Lower lobe of right lung (tissue), 2 donors: ENCODE measurements at regions of chr4 and their contacts with region 1.

Region 1: GRCh38 chr4:74133786-74134499 is 24.0 kb upstream of the MTHFD2L start:
- DNase-seq: peak; percentile 72
- ATAC-seq: peak; percentile 93 to 98
- H3K4me3 ChIP-seq: no peak overlapping the region
- H3K27ac ChIP-seq: no peak overlapping the region
- H3K4me1 ChIP-seq: peaks cover 4% of the 10 kb centered on the region
- H3K27me3 ChIP-seq: no peaks in the 10 kb centered on the region
- CTCF ChIP-seq: peak; percentile 81

Region 2: DNA sequence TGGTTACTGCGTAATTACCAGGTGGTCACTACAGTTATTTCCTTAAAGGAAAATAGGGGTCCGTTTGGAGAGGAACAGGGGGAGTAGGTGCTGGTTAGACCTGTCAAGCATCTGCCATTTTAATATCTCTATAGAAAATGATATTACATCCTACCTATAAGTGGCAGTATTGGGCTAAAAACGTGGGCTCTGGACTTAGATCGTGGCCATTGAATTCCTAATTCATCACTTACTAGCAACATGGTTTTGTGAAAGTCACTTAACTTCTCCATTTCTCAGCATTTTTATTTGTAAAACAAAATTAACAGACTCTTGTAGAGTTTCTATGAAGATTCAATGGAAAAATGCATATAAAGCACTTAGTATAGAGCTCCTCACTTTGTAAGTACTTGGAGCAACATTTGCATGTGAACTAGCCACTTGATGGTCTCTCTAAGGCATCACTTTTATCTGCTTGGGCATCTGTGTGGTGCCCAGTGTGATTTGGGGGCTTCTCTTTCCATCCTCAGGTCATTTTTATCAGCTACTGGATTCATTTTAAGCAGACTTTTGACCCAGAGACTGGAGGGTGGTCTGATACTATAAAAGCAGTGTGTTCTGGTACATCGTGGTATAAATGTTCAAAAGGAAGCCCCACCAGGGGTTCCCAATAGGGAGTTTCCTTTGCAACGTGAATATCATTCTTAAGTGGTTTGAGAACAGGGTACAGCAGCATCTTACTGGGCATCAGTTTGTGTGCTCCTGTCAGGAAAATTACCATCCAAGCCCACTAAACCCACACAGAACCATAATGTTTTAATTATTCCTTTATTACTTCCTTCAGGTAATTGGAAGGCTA is 471.0 kb before region 1 on chr4:
- intact Hi-C with region 1: loop called (anchors 10 kb)
- DNase-seq: no peak
- ATAC-seq: peak; percentile 70 to 89
- H3K4me3 ChIP-seq: no peak overlapping the region
- H3K27ac ChIP-seq: no peak overlapping the region
- H3K4me1 ChIP-seq: no peaks in the 10 kb centered on the region
- H3K27me3 ChIP-seq: no peaks in the 10 kb centered on the region
- CTCF ChIP-seq: peak; percentile 46

Region 3: GRCh38 chr4:74258963-74259362 is 125.0 kb after region 1 on chr4:
- intact Hi-C with region 1: no loop called
- DNase-seq: no peak
- ATAC-seq: no peak
- H3K4me3 ChIP-seq: no peak overlapping the region
- H3K27ac ChIP-seq: no peak overlapping the region
- H3K4me1 ChIP-seq: no peaks in the 10 kb centered on the region
- H3K27me3 ChIP-seq: no peaks in the 10 kb centered on the region
- CTCF ChIP-seq: no peak